Activated CD8-positive, alpha-beta T cell treated with anti-CD3 and anti-CD28 coated beads, Interleukin-2, amount 10 ng/mL, durations not matched to agents 7 days and 5 days (primary cell): ENCODE measurements at regions of chr12 and their contacts with region 1.

Region 1: DNA sequence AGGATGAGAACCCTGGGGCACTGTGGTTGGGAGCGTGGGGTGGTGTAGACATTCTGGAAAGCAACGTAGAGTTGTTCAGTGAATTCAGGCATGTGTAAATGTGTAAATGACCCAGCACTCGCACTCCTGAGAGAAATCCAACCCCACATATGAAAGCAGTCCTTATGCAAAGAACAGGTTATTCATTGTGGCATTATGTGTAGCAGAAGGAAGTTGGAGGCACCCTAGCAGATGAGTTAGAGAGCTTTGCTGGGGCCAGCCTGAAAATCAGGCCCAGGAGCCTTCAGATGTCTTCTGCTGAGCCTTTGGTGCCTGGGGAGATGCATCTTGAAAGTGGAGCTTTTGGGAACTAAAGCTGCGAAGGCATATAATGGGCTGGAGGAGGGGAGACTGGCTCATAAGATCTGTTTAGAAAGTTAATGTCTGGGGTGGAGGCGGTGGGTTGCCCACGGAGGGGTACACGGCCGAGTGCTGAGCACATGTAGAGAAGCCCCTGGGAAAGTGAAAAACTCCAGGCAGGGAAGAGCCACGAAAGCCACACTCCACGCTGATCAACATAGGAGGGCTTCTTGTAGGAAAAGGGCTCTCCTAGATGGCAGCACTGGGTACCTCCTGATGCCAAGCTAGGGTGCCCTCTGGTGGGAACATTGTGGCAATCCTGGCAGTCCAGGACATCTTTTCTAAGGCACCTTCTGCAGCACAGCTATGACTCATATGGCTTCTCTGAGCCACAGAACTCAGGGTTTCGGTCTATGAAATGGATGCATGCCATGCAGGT is 6.0 kb upstream of the KRT83 start:
- DNase-seq: peak; percentile 88
- ATAC-seq: peak; percentile 98
- H3K4me3 Mint-ChIP-seq: no peak overlapping the region
- H3K27ac Mint-ChIP-seq: no peak overlapping the region
- H3K4me1 Mint-ChIP-seq: peaks cover 16% of the 10 kb centered on the region
- H3K27me3 Mint-ChIP-seq: peaks cover 28% of the 10 kb centered on the region

Region 2: DNA sequence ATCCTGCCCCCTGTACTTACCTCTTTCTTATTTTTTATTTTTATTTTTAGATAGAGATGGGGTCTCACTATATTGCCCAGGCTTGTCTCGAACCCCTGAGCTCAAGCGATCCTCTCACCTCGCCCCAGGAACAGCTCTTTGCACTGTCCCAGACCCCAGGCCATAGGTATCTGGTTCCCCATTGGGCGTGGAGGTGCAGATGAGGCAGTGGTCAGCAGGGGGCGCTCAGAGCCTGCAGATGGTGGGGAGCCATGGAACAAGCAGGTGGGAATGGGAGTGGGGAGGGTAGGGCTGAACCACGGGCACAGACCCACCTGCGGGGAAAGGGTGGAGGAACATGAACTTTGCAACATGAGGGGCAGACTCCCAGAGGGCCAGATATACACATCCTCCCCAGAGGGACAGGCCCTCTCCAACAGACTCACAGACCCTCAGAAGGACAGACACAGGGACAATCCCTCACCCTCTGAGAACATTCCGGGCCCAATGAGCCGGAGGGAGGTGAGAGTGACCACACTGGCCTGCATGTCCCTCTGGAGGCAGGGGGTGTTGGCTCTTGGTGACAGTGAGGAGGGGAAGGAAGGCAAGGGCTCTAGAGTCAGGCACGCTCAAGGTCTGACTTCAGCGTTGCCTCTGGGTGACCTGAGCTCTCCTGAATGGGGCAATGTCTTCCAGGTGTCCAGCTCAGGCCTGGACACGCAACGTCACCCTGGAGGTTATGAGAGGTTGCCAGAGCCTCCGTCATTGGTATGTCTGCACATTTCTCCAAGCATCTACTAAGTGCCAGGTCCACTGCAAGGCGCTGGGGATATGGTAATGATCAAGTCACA is 170.3 kb before region 1 on chr12:
- CTCF ChIA-PET with region 1: interaction called, 25 read pairs
- POLR2A ChIA-PET with region 1: no interaction called
- DNase-seq: peak; percentile 81
- ATAC-seq: peak; percentile 54
- H3K4me3 Mint-ChIP-seq: no peak overlapping the region
- H3K27ac Mint-ChIP-seq: peak overlapping the region; percentile 33
- H3K4me1 Mint-ChIP-seq: peaks cover 27% of the 10 kb centered on the region
- H3K27me3 Mint-ChIP-seq: peaks cover 2% of the 10 kb centered on the region

Region 3: GRCh38 chr12:52221912-52222457 is 105.3 kb before region 1 on chr12:
- CTCF ChIA-PET with region 1: interaction called, 22 read pairs
- POLR2A ChIA-PET with region 1: no interaction called
- DNase-seq: peak; percentile 86
- ATAC-seq: peak; percentile 87
- H3K4me3 Mint-ChIP-seq: no peak overlapping the region
- H3K27ac Mint-ChIP-seq: no peak overlapping the region
- H3K4me1 Mint-ChIP-seq: peaks cover 9% of the 10 kb centered on the region
- H3K27me3 Mint-ChIP-seq: peaks cover 58% of the 10 kb centered on the region

Region 4: GRCh38 chr12:52307836-52308805 is 19.1 kb before region 1 on chr12:
- CTCF ChIA-PET with region 1: interaction called, 50 read pairs
- POLR2A ChIA-PET with region 1: no interaction called
- DNase-seq: peak; percentile 72
- ATAC-seq: peak; percentile 92
- H3K4me3 Mint-ChIP-seq: peak overlapping the region; percentile 68
- H3K27ac Mint-ChIP-seq: no peak overlapping the region
- H3K4me1 Mint-ChIP-seq: peaks cover 32% of the 10 kb centered on the region
- H3K27me3 Mint-ChIP-seq: peaks cover 62% of the 10 kb centered on the region

Region 5: GRCh38 chr12:52313926-52314325 is 13.3 kb before region 1 on chr12:
- CTCF ChIA-PET with region 1: interaction called, 50 read pairs
- POLR2A ChIA-PET with region 1: interaction called, 3 read pairs
- DNase-seq: no peak
- ATAC-seq: no peak
- H3K4me3 Mint-ChIP-seq: no peak overlapping the region
- H3K27ac Mint-ChIP-seq: no peak overlapping the region
- H3K4me1 Mint-ChIP-seq: peaks cover 4% of the 10 kb centered on the region
- H3K27me3 Mint-ChIP-seq: peaks cover 40% of the 10 kb centered on the region

Region 6: DNA sequence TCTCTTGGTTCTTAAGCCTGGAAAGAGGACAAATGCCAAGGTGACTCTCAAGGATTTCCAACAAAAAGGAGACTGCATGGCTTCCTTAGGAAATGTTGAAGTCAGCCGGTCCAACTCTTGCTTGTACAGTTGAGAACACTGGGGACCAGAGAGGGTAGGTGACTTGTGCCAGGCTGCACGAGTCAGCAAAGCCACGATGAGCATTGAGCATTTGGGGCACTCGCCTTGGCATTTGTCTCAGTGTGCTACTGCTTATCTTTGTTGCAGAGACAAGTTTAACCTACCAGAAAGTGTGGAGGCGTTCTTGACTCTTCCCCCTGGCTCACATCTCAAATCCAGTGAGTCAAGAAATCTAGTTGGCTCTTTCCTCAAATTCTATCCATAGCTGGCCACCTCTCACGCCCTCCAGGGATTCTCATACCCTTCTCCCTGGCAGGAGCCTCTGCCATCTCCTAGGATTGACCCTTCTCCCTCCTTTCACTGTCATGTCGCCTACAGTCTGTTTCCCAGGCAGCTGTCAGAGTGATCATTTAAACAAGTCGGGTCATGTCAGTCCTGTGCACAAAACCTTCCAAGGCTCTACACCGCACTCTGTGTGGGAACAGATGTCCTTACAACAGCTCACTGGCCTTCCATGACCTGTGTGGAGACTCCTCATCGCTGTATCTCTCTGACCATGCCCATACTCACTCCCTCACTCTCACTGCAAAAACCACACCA is 11.2 kb after region 1 on chr12:
- CTCF ChIA-PET with region 1: interaction called, 15 read pairs
- POLR2A ChIA-PET with region 1: no interaction called
- DNase-seq: no peak
- ATAC-seq: no peak
- H3K4me3 Mint-ChIP-seq: no peak overlapping the region
- H3K27ac Mint-ChIP-seq: no peak overlapping the region
- H3K4me1 Mint-ChIP-seq: no peaks in the 10 kb centered on the region
- H3K27me3 Mint-ChIP-seq: peaks cover 20% of the 10 kb centered on the region

Region 7: GRCh38 chr12:52351196-52352059 is 24.2 kb after region 1 on chr12:
- CTCF ChIA-PET with region 1: interaction called, 11 read pairs
- POLR2A ChIA-PET with region 1: no interaction called
- DNase-seq: peak; percentile 69
- ATAC-seq: peak; percentile 92
- H3K4me3 Mint-ChIP-seq: no peak overlapping the region
- H3K27ac Mint-ChIP-seq: no peak overlapping the region
- H3K4me1 Mint-ChIP-seq: peaks cover 8% of the 10 kb centered on the region
- H3K27me3 Mint-ChIP-seq: peaks cover 45% of the 10 kb centered on the region